ENCODE measurements at regions of chr11 and their contacts with region 1.

Region 1: GRCh38 chr11:47731475-47731874 is 16.3 kb upstream of the AGBL2 start:
- DNase-seq: no peak
- ATAC-seq: no peak
- H3K4me3 ChIP-seq: no peak overlapping the region
- H3K4me3 Mint-ChIP-seq: no peak overlapping the region
- H3K27ac ChIP-seq: no peak overlapping the region
- H3K27ac Mint-ChIP-seq: peak overlapping the region in 6 of 9 donors; percentile 22 to 78 (median 70)
- H3K4me1 ChIP-seq: no peaks in the 10 kb centered on the region
- H3K4me1 Mint-ChIP-seq: peaks cover 0 to 11% (median 1%) of the 10 kb centered on the region in 7 donors
- H3K27me3 ChIP-seq: no peaks in the 10 kb centered on the region
- H3K27me3 Mint-ChIP-seq: no peaks in the 10 kb centered on the region

Region 2: DNA sequence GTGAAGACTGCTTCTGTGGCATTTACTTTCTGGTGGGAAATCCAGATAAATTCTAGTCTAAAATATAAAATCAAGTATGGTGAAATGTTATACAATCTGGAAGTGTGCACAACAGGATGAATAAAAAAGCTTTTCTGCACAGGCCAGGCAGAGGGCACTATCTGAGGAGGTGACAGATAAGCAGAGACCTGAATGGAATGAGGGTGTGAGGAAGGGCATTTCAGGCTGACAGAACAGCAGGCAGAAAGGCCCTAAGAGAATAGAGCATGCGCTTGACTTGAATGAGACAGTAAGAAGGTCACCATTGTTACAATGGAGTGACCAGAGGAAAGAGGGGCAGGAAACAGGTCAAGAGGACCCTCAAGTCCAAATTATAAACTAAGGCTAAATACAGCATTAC is 69.3 kb after region 1 on chr11:
- CTCF ChIA-PET with region 1: no interaction called
- POLR2A ChIA-PET with region 1: no interaction called
- intact Hi-C with region 1: loop called in 1 of 2 experiments (anchors 10 kb)
- DNase-seq: no peak
- ATAC-seq: no peak
- H3K4me3 ChIP-seq: no peak overlapping the region
- H3K4me3 Mint-ChIP-seq: no peak overlapping the region
- H3K27ac ChIP-seq: no peak overlapping the region
- H3K27ac Mint-ChIP-seq: peak overlapping the region in 1 of 9 donors; percentile 38
- H3K4me1 ChIP-seq: no peaks in the 10 kb centered on the region
- H3K4me1 Mint-ChIP-seq: peaks cover 0 to 9% (median 0%) of the 10 kb centered on the region in 7 donors
- H3K27me3 ChIP-seq: no peaks in the 10 kb centered on the region
- H3K27me3 Mint-ChIP-seq: no peaks in the 10 kb centered on the region

Measured in naive thymus-derived CD4-positive, alpha-beta T cell (primary cell).